ENCODE measurements at regions of chr19 and their contacts with region 1.

Region 1: GRCh38 chr19:58002384-58003173 is at the start of gene ZNF606:
- DNase-seq: peak; percentile 93
- H3K4me3 ChIP-seq: peak within 1 kb of the TSS; percentile 87 to 97 (median 96)
- H3K27ac ChIP-seq: peak within 1 kb of the TSS; percentile 91 to 96 (median 94)
- H3K4me1 ChIP-seq: peaks cover 25 to 36% (median 26%) of the 10 kb centered on the region in 4 donors
- H3K27me3 ChIP-seq: no peaks in the 10 kb centered on the region
- CTCF ChIP-seq: no peak
- EP300 ChIP-seq: no peak
- POLR2A ChIP-seq: peak; percentile 60
- total RNA-seq, gene ZNF606: 7.6 to 23.3 (median 15.5) TPM

Region 2: DNA sequence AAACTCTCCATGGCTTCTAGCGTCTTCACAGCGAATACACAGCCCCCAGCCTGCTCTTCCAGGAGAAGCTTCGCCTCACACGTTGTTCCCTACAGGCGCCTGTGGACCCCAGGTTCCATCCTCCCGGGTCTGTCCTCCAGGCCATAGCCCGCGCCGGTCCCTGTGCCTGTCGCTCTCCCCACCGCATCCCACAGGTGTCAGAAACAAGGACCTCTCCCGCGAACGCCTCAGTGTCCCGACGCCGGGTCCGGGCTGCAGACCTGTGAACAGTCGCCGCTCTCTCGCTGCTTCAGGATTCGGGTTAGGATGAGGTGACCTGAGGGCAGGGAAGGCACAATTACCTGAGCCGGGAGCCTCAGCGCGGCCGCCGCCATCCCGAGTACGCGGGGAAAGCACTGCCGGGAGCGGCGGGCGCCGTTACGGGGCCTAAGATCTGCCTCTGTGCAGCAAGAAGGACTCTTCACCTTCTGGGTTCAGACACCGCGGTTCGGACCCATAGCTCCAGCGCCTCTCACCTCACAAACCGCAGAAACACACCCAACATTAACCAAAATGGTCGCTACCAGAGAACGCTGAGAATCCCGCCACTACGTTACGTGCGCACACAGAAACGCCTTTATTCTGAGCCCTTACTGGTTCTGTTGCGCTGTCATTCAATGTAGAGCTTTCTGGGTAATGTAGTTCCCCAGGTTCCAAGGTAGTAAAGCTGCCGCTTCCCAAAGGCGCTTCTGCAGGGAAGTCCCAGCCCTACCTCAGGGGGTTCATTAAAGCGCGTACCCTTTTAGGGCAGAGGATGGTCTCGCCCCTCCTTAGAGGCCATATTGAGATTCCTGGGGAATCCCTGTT is 67.5 kb before region 1 on chr19 and contains the start of gene ZNF418:
- intact Hi-C with region 1: loop called (anchors 5 kb)
- DNase-seq: no peak
- H3K4me3 ChIP-seq: peak within 1 kb of the TSS; percentile 70 to 83 (median 74)
- H3K27ac ChIP-seq: peak within 1 kb of the TSS; percentile 75 to 88 (median 84)
- H3K4me1 ChIP-seq: peaks cover 4 to 18% (median 13%) of the 10 kb centered on the region in 4 donors
- H3K27me3 ChIP-seq: no peaks in the 10 kb centered on the region
- CTCF ChIP-seq: no peak
- EP300 ChIP-seq: no peak
- POLR2A ChIP-seq: no peak
- total RNA-seq, gene ZNF418: 11.6 to 21.2 (median 16.3) TPM